ENCODE measurements at regions of chr12 and their contacts with region 1.

Region 1: GRCh38 chr12:116236148-116236731 is 41.3 kb downstream of the MED13L start:
- DNase-seq: peak; percentile 51 to 68 (median 60)
- ATAC-seq: peak; percentile 64
- H3K4me3 ChIP-seq: no peak overlapping the region
- H3K27ac ChIP-seq: no peak overlapping the region
- H3K4me1 ChIP-seq: peaks cover 10% of the 10 kb centered on the region
- H3K27me3 ChIP-seq: no peaks in the 10 kb centered on the region
- CTCF ChIP-seq: peak; percentile 50 to 85 (median 77)
- POLR2A ChIP-seq: no peak

Region 2: GRCh38 chr12:116015525-116015924 is 220.7 kb before region 1 on chr12:
- intact Hi-C with region 1: loop called (anchors 10 kb)
- DNase-seq: peak in 2 of 4 donors; percentile 10 to 40
- ATAC-seq: peak; percentile 78
- H3K4me3 ChIP-seq: no peak overlapping the region
- H3K27ac ChIP-seq: no peak overlapping the region
- H3K4me1 ChIP-seq: peaks cover 18% of the 10 kb centered on the region
- H3K27me3 ChIP-seq: no peaks in the 10 kb centered on the region
- CTCF ChIP-seq: peak; percentile 18 to 71 (median 59)
- POLR2A ChIP-seq: no peak